ENCODE measurements at regions of chr16 and their contacts with region 1.

Region 1: DNA sequence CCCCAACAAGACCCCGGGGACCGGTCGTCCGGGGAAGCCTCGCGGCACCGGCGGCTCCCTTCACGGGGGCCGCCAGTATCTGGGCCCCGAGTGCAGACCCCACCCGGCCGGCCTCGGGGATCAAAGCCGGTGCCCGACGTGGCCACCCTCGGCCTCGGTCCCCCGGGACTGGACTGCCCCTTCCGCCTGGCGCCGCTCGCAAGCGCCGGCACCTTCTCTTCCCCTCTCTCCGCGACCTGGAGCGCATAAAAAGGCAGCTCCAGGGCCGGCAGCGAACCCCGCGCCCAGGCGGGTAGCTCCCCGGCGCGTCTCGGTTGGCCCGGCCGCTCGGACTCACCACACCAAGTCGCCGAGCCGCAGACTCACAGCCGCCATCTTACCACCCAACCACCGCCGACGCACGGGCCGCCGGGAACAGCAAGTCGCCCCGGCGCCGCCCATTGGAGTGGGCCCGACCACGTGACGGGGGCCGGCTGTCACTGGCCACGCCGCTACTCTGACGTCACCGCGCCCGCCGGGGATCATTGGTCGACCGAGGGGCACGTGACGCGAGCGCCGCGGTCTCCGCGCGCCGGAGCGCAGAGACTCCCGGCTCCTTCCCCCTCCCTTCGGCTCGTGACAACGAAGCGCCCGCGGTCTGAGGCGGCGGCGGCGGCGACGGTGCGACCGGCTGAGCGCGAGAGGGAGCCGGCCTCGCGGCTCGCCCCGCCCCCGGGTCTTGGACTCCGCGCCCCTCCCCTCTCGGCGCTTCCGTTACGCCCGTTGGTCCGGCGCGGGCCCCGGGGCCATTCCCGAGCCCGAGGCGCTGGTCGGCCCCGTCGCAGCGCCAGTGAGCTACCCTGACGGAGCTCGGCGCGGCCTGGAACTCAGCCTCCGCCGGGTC is at the starts of genes GLYR1 and UBN1:
- DNase-seq: peak; percentile 97
- H3K4me3 ChIP-seq: peak within 1 kb of the TSS; percentile 86 to 96 (median 86)
- H3K27ac ChIP-seq: peak within 1 kb of the TSS; percentile 84
- H3K4me1 ChIP-seq: peaks cover 40% of the 10 kb centered on the region
- H3K27me3 ChIP-seq: no peaks in the 10 kb centered on the region
- CTCF ChIP-seq: no peak
- POLR2A ChIP-seq: peak; percentile 81
- total RNA-seq, gene GLYR1: 107 TPM in 2 replicates
- total RNA-seq, gene UBN1: 44.8 and 45.3 TPM in 2 replicates

Region 2: DNA sequence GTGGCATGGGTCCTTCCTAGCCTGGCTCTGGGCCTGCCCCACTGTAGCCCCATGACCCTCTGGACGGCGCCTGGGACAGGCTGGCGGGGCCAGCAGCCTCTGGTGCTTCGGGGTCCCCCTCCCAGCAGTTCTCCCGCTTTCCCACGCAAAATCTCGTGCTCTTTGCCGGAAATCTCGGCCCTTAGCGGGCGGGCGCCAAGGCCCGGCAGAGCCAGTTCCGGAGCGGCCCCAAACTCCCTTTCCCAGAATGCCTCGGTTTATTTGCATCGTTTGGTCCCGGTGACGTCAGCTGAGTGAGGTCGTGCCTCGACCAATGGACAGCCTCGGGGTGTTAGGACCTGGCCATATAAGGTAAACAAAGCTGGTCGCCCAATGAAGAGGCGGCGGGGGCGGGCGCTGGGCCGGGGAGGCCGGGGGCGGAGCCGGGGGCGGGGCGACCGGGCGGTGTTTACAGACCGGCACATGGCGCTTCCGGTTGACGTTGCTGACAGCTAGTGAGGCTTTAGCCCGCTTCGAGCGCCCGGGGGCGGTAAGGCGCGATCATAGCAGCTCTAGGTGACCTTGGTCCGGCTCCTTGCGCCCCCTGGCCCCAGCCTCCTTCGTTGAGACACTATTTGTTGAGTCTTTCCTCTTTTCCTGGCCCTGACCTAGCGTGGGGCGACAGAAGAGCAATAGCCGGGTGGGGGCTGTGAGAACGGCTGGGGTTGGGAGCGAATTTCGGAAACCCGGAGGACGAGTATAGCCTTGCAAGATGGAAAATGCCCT is 230.9 kb before region 1 on chr16:
- CTCF ChIA-PET with region 1: no interaction called
- POLR2A ChIA-PET with region 1: no interaction called
- dilution Hi-C with region 1: no loop called
- intact Hi-C with region 1: loop called (anchors 2 kb)
- DNase-seq: peak; percentile 99
- H3K4me3 ChIP-seq: peak overlapping the region in 2 of 3 experiments; percentile 17 to 19
- H3K27ac ChIP-seq: peak overlapping the region; percentile 79
- H3K4me1 ChIP-seq: peaks cover 21% of the 10 kb centered on the region
- H3K27me3 ChIP-seq: no peaks in the 10 kb centered on the region
- CTCF ChIP-seq: peak; percentile 16 to 58
- POLR2A ChIP-seq: peak; percentile 71

Region 3: GRCh38 chr16:4802659-4803287 is 44.4 kb before region 1 on chr16:
- CTCF ChIA-PET with region 1: no interaction called
- POLR2A ChIA-PET with region 1: no interaction called
- dilution Hi-C with region 1: no loop called
- intact Hi-C with region 1: loop called (anchors 1 kb)
- DNase-seq: peak; percentile 91
- H3K4me3 ChIP-seq: peak overlapping the region; percentile 59 to 76 (median 75)
- H3K27ac ChIP-seq: no peak overlapping the region
- H3K4me1 ChIP-seq: peaks cover 7% of the 10 kb centered on the region
- H3K27me3 ChIP-seq: no peaks in the 10 kb centered on the region
- CTCF ChIP-seq: no peak
- POLR2A ChIP-seq: peak; percentile 26

Region 4: GRCh38 chr16:4944333-4945281 is 97.5 kb after region 1 on chr16:
- CTCF ChIA-PET with region 1: no interaction called
- POLR2A ChIA-PET with region 1: no interaction called
- dilution Hi-C with region 1: no loop called
- intact Hi-C with region 1: loop called (anchors 2 kb)
- DNase-seq: peak; percentile 98
- H3K4me3 ChIP-seq: no peak overlapping the region
- H3K27ac ChIP-seq: peak overlapping the region; percentile 90
- H3K4me1 ChIP-seq: peaks cover 33% of the 10 kb centered on the region
- H3K27me3 ChIP-seq: no peaks in the 10 kb centered on the region
- CTCF ChIP-seq: no peak
- POLR2A ChIP-seq: no peak

Measured in endothelial cell of umbilical vein (primary cell).